ENCODE measurements at regions of chr14 and their contacts with region 1.

Region 1: DNA sequence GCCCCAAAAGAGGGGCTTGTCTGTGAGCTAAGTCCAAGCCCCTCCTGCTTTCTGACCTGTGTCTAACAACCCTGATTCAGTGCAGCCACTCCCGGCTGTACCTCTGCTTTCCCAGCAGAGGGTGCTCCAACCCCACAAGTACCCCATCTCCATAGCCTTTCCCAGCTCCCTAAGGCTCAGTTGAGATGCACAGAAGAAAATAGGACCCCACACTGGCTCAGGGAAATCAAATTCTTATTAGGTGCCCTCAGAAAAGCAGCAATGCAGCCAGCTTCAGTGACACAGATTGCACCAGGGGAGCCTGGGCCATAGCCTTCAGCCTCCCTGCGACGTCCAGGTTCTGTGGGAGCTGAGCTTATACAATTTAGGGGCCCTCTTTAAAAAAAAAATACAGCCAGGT is 49.9 kb downstream of the LRRC74A start:
- DNase-seq: peak; percentile 73
- ATAC-seq: peak; percentile 98
- H3K4me3 ChIP-seq: no peak overlapping the region
- H3K27ac ChIP-seq: no peak overlapping the region
- H3K4me1 ChIP-seq: no peaks in the 10 kb centered on the region
- H3K27me3 ChIP-seq: peaks cover 6% of the 10 kb centered on the region
- CTCF ChIP-seq: peak; percentile 99
- POLR2A ChIP-seq: peak; percentile 58
- RAD21 ChIP-seq: peak; percentile 100

Region 2: GRCh38 chr14:76904740-76905438 is 28.8 kb after region 1 on chr14:
- CTCF ChIA-PET with region 1: interaction called, 9 read pairs
- POLR2A ChIA-PET with region 1: no interaction called
- dilution Hi-C with region 1: no loop called
- in situ Hi-C with region 1: no loop called
- intact Hi-C with region 1: loop called (anchors 1 kb)
- DNase-seq: peak; percentile 99
- ATAC-seq: peak; percentile 76
- H3K4me3 ChIP-seq: no peak overlapping the region
- H3K27ac ChIP-seq: peak overlapping the region; percentile 91
- H3K4me1 ChIP-seq: peaks cover 29% of the 10 kb centered on the region
- H3K27me3 ChIP-seq: no peaks in the 10 kb centered on the region
- CTCF ChIP-seq: no peak
- POLR2A ChIP-seq: peak; percentile 69
- RAD21 ChIP-seq: no peak

Region 3: DNA sequence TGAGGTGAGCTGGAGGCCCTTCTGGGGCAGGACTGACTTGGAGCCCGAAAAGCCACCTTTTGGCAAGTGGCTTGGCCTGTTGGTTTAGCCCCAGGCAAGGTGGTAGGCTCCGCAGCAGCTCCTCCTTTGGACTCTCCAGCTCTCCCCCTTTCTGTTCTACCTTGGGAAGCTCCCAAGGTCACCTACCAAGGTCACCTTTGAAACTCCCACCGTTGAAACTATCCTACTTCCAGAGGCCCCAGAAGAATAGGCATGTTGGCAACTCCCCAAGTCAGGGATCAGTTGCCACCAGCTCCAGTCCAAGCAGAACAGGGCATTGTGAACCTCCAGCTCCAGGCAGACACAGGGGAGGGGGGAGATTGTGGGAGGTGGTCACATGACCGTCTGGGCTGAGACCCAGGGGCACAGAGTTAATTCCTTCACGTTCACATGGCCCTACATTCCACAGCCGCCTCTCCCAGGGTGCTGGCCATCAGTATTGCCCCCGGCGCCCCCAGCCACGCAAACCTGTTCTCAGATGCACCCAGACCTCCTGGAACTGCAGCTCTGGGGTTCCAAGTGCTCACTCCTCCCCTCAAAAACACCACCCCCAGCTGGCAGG is 138.0 kb after region 1 on chr14:
- CTCF ChIA-PET with region 1: no interaction called
- POLR2A ChIA-PET with region 1: no interaction called
- dilution Hi-C with region 1: no loop called
- in situ Hi-C with region 1: no loop called
- intact Hi-C with region 1: no loop called
- DNase-seq: peak; percentile 47
- ATAC-seq: peak; percentile 83
- H3K4me3 ChIP-seq: no peak overlapping the region
- H3K27ac ChIP-seq: no peak overlapping the region
- H3K4me1 ChIP-seq: peaks cover 5% of the 10 kb centered on the region
- H3K27me3 ChIP-seq: peaks cover 5% of the 10 kb centered on the region; the same call in 1 of the 2 replicates
- CTCF ChIP-seq: no peak
- POLR2A ChIP-seq: no peak
- RAD21 ChIP-seq: no peak

Region 4: DNA sequence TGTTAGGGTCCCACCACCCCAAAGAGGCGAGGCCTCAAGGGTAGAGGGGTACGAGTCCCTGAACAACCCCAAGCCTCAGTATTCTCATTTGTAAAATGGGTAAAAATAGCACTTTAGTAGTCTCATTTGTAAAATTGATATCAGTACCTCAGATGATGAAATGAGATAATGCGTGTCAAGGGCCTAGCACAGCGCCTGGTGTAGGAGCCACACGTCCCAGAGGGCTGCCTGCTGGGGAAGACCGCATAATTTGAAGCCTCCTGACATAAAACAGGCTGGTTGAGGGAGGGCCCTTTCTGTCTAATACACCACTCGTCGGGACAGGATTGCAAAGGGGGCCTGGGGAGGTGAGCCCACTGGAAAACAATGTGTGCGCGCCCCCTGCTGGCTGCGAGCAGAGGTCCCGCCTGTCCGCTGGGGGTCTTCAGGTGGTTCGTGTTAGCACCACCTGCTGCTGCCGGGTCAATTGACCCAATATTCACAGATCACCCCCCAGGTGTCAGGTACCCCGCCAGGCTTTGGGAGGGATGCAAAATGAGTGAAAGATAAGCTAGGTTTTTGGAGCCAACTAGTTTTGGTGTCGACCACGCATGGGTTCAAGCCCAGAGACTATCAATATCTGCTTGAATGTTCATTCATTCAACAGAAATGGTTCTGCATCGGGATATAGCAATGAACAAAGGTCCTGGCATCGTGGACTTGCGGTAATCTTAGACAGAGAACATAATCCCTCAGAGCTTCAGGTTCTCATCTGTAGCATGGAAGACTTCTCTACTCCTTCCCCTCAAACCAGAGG is 177.2 kb after region 1 on chr14:
- CTCF ChIA-PET with region 1: interaction called, 8 read pairs
- POLR2A ChIA-PET with region 1: no interaction called
- dilution Hi-C with region 1: no loop called
- in situ Hi-C with region 1: no loop called
- intact Hi-C with region 1: loop called (anchors 1 kb)
- DNase-seq: peak; percentile 76
- ATAC-seq: peak; percentile 87
- H3K4me3 ChIP-seq: no peak overlapping the region
- H3K27ac ChIP-seq: no peak overlapping the region
- H3K4me1 ChIP-seq: peaks cover 10% of the 10 kb centered on the region
- H3K27me3 ChIP-seq: no peaks in the 10 kb centered on the region
- CTCF ChIP-seq: peak; percentile 94
- POLR2A ChIP-seq: peak; percentile 55; the same call in 1 of the 2 replicates
- RAD21 ChIP-seq: peak; percentile 98

Region 5: GRCh38 chr14:77097700-77098528 is 221.8 kb after region 1 on chr14 and contains the start of gene CIPC:
- CTCF ChIA-PET with region 1: interaction called, 21 read pairs
- POLR2A ChIA-PET with region 1: no interaction called
- dilution Hi-C with region 1: loop called (anchors 25 kb)
- in situ Hi-C with region 1: no loop called
- intact Hi-C with region 1: loop called (anchors 1 kb)
- DNase-seq: peak; percentile 98
- ATAC-seq: peak; percentile 95
- H3K4me3 ChIP-seq: peak within 1 kb of the TSS; percentile 82
- H3K27ac ChIP-seq: peak within 1 kb of the TSS; percentile 93
- H3K4me1 ChIP-seq: peaks cover 6% of the 10 kb centered on the region
- H3K27me3 ChIP-seq: no peaks in the 10 kb centered on the region
- CTCF ChIP-seq: no peak
- POLR2A ChIP-seq: peak; percentile 82
- RAD21 ChIP-seq: no peak
- total RNA-seq, gene CIPC: 12.9 and 13.1 TPM in 2 replicates

Region 6: DNA sequence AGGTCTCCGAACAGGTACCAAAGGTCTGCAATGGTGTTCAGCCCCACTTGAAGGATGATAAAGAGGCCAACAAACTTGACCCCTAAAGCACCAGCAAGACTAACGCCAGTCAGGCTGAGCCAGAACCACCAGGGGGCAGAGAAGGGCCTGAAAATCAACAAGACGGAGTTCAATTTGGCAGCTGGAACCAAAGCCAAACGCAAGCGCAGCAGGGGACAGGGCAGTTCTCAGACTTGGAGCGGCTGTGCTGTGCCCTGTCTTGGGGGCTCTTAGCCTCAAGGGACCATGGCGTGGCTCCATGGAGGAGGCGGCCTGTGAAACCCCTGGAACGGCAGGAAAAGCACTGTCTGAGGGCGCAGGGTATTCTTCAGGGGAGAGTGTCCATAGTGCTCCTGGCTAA is 425.0 kb after region 1 on chr14:
- CTCF ChIA-PET with region 1: no interaction called
- POLR2A ChIA-PET with region 1: no interaction called
- dilution Hi-C with region 1: no loop called
- in situ Hi-C with region 1: loop called (anchors 25 kb)
- intact Hi-C with region 1: loop called (anchors 5 kb)
- DNase-seq: peak; percentile 85
- ATAC-seq: peak; percentile 81
- H3K4me3 ChIP-seq: no peak overlapping the region
- H3K27ac ChIP-seq: no peak overlapping the region
- H3K4me1 ChIP-seq: peaks cover 10% of the 10 kb centered on the region
- H3K27me3 ChIP-seq: no peaks in the 10 kb centered on the region
- CTCF ChIP-seq: peak; percentile 91
- POLR2A ChIP-seq: no peak
- RAD21 ChIP-seq: peak; percentile 86

Region 7: DNA sequence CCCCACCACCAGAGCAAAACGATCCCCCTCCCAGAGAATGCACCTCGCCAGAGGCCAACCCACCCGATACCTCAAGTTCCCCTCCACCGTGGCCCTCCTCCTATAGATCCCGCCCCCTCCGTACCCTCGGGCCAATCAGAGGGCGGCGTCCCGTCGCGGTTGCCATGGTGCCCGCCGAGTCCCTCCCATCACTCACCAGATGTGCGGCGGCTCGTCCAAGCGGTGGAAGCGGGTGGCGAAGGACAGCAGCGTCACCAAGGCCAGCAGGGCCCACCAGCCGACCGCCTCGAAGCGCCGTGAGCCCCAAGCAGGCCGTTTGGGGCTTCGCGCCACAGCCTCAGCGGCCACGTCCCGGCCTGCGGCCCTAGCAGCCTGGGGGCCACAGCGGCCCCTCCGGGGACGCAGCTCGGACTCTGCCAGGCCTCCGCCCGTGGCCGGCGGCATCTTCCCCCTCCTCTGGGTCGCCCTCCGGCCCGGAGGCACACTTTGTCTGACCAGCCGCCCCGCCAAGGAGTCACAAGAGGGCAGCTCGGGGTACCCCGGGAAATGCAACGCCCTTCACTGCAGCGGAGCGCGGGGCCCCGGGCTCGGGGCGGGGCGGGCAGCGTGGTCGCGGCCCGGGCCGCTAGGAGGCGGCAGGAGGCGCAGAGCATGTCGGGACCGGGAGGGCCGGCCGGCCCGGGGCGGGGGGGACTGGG is 444.3 kb after region 1 on chr14 and contains the start of gene POMT2:
- CTCF ChIA-PET with region 1: no interaction called
- POLR2A ChIA-PET with region 1: no interaction called
- dilution Hi-C with region 1: no loop called
- in situ Hi-C with region 1: loop called (anchors 25 kb)
- intact Hi-C with region 1: no loop called
- DNase-seq: peak; percentile 79
- ATAC-seq: peak; percentile 64
- H3K4me3 ChIP-seq: peak within 1 kb of the TSS; percentile 84
- H3K27ac ChIP-seq: peak within 1 kb of the TSS; percentile 98
- H3K4me1 ChIP-seq: peaks cover 2% of the 10 kb centered on the region; the same call in 1 of the 2 replicates
- H3K27me3 ChIP-seq: no peaks in the 10 kb centered on the region
- CTCF ChIP-seq: peak; percentile 57
- POLR2A ChIP-seq: no peak
- RAD21 ChIP-seq: 0 out of 2 replicates have a peak, but pooled peaks have one; percentile 9
- total RNA-seq, gene POMT2: 5.8 and 6.5 TPM in 2 replicates

Measured in IMR-90 (cell line).